MCF 10A (cell line): ENCODE measurements at regions of chr18 and their contacts with region 1.

Region 1: GRCh38 chr18:9913526-9914333 is at the start of gene VAPA:
- DNase-seq: peak; percentile 93
- H3K4me3 Mint-ChIP-seq: peak within 1 kb of the TSS; percentile 91
- H3K27ac Mint-ChIP-seq: peak within 1 kb of the TSS; percentile 96
- H3K4me1 Mint-ChIP-seq: peaks cover 13% of the 10 kb centered on the region
- H3K27me3 Mint-ChIP-seq: no peaks in the 10 kb centered on the region
- CTCF ChIP-seq: no peak
- total RNA-seq, gene VAPA: 247 and 286 TPM in 2 replicates

Region 2: DNA sequence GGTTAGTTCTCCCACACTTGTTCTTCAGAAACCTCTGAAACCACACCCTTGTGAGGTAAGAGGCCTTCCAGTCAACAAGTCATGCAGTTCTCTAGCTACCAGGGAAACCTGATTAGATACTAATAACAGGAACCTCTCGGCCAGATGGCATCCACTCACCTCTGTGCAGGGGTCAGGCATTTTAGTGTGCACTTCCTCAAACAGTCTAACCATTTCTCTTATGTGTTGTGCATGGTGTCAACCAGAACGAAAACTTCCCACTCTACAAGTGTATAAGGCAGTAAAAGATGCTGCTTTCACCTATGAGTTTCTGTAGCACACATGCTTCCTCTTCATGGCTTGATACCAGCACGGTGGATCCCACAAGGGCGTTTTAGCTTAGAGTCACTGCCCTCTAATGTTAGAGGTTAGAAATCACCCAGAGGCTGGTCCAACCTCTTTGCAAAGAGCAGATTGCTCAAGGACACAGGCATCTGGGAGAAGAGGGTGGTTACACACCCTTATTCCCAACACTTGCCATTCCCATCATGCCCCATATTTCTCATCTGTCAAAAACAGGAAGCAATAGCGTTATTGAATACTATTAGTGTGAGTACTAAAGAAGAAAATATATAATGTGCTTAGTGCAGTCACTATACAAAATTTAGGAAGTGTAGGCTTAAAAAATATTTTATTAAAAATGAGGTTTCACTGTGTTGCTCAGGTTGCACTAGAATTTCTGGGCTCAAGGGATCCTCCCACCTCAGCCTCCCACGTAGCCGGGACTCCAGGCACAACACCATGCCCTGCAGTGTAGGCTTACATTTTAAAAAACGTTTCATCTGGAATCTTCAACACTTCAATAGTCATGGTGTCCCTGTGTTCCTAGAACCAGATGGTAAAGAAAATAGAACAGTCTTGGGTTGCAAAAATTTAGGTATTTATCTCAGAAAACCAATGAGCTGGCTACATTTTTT is 240.2 kb before region 1 on chr18:
- CTCF ChIA-PET with region 1: no interaction called
- POLR2A ChIA-PET with region 1: interaction called, 17 read pairs
- intact Hi-C with region 1: no loop called
- DNase-seq: peak; percentile 93
- H3K4me3 Mint-ChIP-seq: peak overlapping the region; percentile 43
- H3K27ac Mint-ChIP-seq: peak overlapping the region; percentile 94
- H3K4me1 Mint-ChIP-seq: peaks cover 17% of the 10 kb centered on the region
- H3K27me3 Mint-ChIP-seq: no peaks in the 10 kb centered on the region
- CTCF ChIP-seq: peak; percentile 21

Region 3: DNA sequence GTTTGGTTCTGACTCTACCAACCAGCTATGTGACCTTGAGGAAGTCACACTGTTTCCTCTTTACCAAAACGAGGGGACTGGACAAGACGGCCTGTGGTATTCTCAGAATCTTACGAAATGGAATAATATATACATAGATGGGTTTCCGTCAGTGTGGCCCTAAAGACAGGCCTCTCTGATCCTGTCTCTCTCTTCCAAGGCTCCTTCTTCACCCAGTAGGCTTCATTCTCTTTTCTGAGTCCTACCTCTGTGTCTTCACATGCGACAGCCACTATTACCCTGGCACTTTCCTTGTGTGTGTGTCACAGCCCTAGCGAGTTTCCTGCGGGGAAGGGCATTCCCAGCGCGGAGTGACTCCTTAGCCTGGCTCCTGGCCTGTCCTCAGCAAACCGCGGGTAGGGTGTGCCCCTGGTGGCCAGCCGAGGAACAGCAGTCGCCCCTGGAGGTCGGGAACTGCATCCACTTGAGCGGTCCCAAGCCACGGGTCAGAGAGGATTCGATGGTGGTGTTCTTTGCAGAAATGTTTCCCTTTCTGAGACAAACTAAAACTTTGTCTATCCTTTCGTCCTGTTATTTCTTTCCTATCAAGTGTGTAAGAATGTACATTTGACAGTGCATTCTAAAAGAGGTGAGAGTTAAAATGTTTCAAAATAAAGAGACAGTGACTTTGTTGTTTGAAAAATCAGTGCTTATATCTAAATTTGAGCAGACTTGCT is 142.3 kb before region 1 on chr18:
- CTCF ChIA-PET with region 1: no interaction called
- POLR2A ChIA-PET with region 1: no interaction called
- intact Hi-C with region 1: loop called (anchors 10 kb)
- DNase-seq: peak; percentile 74
- H3K4me3 Mint-ChIP-seq: no peak overlapping the region
- H3K27ac Mint-ChIP-seq: no peak overlapping the region
- H3K4me1 Mint-ChIP-seq: peaks cover 6% of the 10 kb centered on the region
- H3K27me3 Mint-ChIP-seq: no peaks in the 10 kb centered on the region
- CTCF ChIP-seq: peak; percentile 96

Region 4: GRCh38 chr18:9869715-9870430 is 43.9 kb before region 1 on chr18:
- CTCF ChIA-PET with region 1: interaction called, 4 read pairs
- POLR2A ChIA-PET with region 1: interaction called, 41 read pairs
- intact Hi-C with region 1: loop called (anchors 5 kb)
- DNase-seq: peak; percentile 92
- H3K4me3 Mint-ChIP-seq: no peak overlapping the region
- H3K27ac Mint-ChIP-seq: peak overlapping the region; percentile 84
- H3K4me1 Mint-ChIP-seq: peaks cover 35% of the 10 kb centered on the region
- H3K27me3 Mint-ChIP-seq: no peaks in the 10 kb centered on the region
- CTCF ChIP-seq: no peak

Region 5: DNA sequence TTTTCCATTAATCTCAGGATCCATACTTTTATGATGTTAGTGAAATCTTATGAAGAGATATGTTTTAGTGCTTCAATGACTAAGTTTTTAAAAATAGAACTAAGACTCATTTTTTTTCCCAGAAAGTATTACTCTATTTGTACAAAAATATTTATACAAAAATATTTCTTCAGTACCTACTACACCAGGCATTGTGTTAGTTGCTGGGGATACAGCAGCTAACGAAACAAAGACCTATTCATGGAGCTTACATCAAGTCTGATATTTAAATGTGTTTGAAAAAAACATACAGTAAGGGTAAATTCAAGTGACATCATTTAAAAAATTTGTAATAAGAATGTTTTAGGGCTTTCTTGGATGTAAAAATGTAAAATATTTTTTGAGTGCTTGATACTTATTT is 11.6 kb after region 1 on chr18:
- CTCF ChIA-PET with region 1: no interaction called
- POLR2A ChIA-PET with region 1: interaction called, 57 read pairs
- intact Hi-C with region 1: no loop called
- DNase-seq: no peak
- H3K4me3 Mint-ChIP-seq: no peak overlapping the region
- H3K27ac Mint-ChIP-seq: no peak overlapping the region
- H3K4me1 Mint-ChIP-seq: peaks cover 35% of the 10 kb centered on the region
- H3K27me3 Mint-ChIP-seq: no peaks in the 10 kb centered on the region
- CTCF ChIP-seq: no peak